Pancreas (tissue), 10 donors: ENCODE measurements at regions of chr10 and their contacts with region 1.

Region 1: DNA sequence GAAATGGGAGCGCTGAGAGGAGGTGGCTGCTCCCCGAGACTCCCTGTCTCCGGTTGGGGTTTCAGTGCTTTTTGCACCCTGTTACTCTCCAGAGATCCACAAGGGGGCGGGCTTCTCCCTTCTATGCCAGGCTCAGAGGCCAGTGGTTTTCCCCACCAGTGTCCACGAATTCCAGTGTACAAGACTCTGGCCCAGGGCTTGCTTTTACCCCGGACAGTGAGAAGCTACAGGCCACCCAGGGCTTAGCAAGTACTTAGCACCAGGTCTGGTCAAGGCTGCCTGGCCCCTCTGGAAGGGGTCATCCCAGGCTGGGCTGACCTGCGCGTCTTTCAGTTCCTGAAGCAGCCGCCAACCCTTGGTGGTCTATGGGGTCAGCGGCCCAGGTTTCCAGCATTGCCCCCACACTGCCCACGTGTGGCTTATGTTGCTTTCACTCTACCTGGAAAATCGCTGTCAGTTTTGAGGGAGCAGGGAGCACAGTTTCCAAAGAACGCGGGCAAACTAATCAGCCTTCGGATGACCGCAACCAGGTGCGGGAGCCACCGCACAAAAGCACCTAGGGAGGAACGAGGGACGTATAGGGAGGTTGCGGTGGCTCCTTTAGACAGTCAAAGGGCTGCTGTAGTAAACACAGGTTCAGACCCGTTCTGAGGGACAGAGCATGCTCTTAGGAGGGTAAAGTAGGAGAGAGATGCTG is 6.8 kb downstream of the CYP26A1 start:
- DNase-seq: peak in 2 of 6 donors; percentile 42 to 69
- ATAC-seq: peak; percentile 48 to 89 (median 84)
- H3K4me3 ChIP-seq: no peak overlapping the region
- H3K27ac ChIP-seq: no peak overlapping the region
- H3K4me1 ChIP-seq: peaks cover 0 to 3% (median 0%) of the 10 kb centered on the region in 3 donors
- H3K27me3 ChIP-seq: peaks cover 0 to 19% (median 4%) of the 10 kb centered on the region in 4 donors
- CTCF ChIP-seq: peak; percentile 65 to 82 (median 75)

Region 2: DNA sequence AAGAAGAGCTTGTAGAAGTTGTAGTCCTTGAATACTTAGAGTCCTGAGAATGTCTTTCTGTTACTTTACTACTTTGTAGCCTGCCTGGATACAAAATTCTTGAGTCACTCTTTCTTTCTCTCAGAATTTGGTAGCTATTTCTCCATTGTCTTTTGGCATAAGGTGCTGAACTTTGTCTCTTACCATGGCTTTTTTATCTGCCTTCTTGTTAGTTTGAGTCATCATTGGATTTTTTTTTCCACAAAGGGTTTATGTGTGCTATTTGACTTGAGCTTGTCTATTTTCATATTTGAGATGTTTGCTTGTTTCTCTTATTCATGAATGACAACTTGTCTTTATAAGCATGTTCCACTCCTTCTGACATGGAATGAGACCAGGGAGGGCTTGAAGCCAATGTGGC is 306.7 kb before region 1 on chr10:
- intact Hi-C with region 1: no loop called
- DNase-seq: no peak
- ATAC-seq: no peak
- H3K4me3 ChIP-seq: no peak overlapping the region
- H3K27ac ChIP-seq: no peak overlapping the region
- H3K4me1 ChIP-seq: no peaks in the 10 kb centered on the region
- H3K27me3 ChIP-seq: no peaks in the 10 kb centered on the region
- CTCF ChIP-seq: no peak

Region 3: GRCh38 chr10:93211991-93212390 is 131.5 kb after region 1 on chr10:
- intact Hi-C with region 1: no loop called
- DNase-seq: no peak
- ATAC-seq: no peak
- H3K4me3 ChIP-seq: no peak overlapping the region
- H3K27ac ChIP-seq: no peak overlapping the region
- H3K4me1 ChIP-seq: no peaks in the 10 kb centered on the region
- H3K27me3 ChIP-seq: no peaks in the 10 kb centered on the region
- CTCF ChIP-seq: no peak

Region 4: DNA sequence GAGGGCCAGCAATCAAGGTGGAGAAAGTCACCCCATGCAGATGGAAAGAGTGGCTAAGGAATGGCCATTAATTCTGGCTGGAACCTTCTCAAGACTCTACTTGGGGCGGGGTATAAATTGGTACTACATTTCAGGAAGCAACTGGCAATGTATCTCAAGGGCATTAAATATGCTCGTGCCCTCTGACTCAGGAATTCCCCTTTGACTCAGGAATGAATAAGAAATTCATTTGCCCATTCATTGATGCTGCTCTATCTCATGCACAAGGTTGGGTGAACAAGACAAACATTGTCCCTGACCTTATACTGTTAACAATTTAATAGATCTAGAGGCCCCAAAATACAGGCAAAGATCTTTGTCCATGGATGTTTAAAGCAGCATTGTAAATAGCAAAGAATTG is 213.5 kb after region 1 on chr10:
- intact Hi-C with region 1: loop called in 1 of 3 experiments (anchors 10 kb)
- DNase-seq: no peak
- ATAC-seq: no peak
- H3K4me3 ChIP-seq: no peak overlapping the region
- H3K27ac ChIP-seq: no peak overlapping the region
- H3K4me1 ChIP-seq: no peaks in the 10 kb centered on the region
- H3K27me3 ChIP-seq: no peaks in the 10 kb centered on the region
- CTCF ChIP-seq: no peak

Region 5: GRCh38 chr10:93352638-93353383 is 272.3 kb after region 1 on chr10:
- intact Hi-C with region 1: loop called in 1 of 3 experiments (anchors 10 kb)
- DNase-seq: no peak
- ATAC-seq: peak in 2 of 4 donors; percentile 38 to 49
- H3K4me3 ChIP-seq: no peak overlapping the region
- H3K27ac ChIP-seq: no peak overlapping the region
- H3K4me1 ChIP-seq: no peaks in the 10 kb centered on the region
- H3K27me3 ChIP-seq: peaks cover 0 to 4% (median 0%) of the 10 kb centered on the region in 4 donors
- CTCF ChIP-seq: peak; percentile 49 to 74 (median 66)